ENCODE measurements at regions of chr15 and their contacts with region 1.

Region 1: DNA sequence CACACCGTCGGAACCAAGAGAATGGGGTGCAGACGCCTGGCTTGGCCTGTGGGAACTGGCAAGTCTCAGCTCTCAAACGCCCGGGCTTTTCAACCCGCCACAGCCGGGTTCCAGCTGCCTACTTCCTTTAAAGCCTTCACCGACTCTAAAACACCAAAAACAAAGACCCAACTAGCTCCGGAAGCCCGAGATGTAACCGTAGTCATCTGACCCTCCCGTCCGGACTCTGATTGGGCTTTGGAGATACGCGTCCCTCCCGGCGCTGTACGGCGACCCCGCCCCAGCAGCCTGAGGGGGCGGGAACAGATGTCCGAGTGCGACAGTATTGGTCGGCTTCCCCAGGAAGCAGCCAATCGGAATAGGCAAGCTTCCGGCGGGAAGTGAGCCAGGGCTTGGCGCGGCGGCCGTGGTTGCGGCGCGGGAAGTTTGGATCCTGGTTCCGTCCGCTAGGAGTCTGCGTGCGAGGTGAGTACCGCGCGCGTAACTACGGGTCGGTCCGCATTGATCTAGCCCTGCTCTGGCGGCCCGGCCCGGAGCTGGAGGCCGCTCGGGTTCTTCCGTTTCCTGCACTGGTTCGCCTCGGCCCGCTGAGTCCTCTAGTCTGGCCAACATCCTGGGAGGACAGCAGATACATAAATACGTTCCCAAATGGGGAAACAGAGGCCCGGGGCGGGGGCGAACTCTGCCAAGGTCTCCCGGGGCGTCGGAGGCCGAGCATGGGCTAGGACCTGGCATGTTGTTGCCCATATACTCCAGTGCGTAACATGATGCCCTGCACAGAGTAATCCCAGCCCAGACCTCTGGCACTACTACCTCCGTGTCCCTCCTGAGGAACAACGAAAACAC is at the start of gene BLM:
- DNase-seq: peak; percentile 94 to 96
- H3K4me3 ChIP-seq: peak within 1 kb of the TSS; percentile 53 to 80 (median 71)
- H3K27ac ChIP-seq: peak within 1 kb of the TSS; percentile 82 to 96
- H3K4me1 ChIP-seq: peaks cover 0 to 9% of the 10 kb centered on the region in 2 donors
- H3K27me3 ChIP-seq: no peaks in the 10 kb centered on the region
- CTCF ChIP-seq: peak; percentile 56 to 64 (median 62)
- POLR2A ChIP-seq: peak; percentile 24
- total RNA-seq, gene BLM: 0.33 to 7.4 (median 2.2) TPM

Region 2: GRCh38 chr15:90937898-90938660 is 220.9 kb after region 1 on chr15:
- intact Hi-C with region 1: loop called (anchors 2 kb)
- DNase-seq: no peak
- H3K4me3 ChIP-seq: no peak overlapping the region
- H3K27ac ChIP-seq: no peak overlapping the region
- H3K4me1 ChIP-seq: peaks cover 0 to 4% of the 10 kb centered on the region in 2 donors
- H3K27me3 ChIP-seq: no peaks in the 10 kb centered on the region
- CTCF ChIP-seq: no peak
- POLR2A ChIP-seq: no peak

Measured in breast epithelium (tissue), 4 donors.